ENCODE measurements at regions of chr2 and their contacts with region 1.

Region 1: GRCh38 chr2:180125245-180125962 is 118.3 kb upstream of the CWC22 start:
- DNase-seq: peak; percentile 76 to 84
- H3K4me3 ChIP-seq: no peak overlapping the region
- H3K27ac ChIP-seq: no peak overlapping the region
- H3K4me1 ChIP-seq: peaks cover 11% of the 10 kb centered on the region; the same call in 1 of the 2 replicates
- H3K27me3 ChIP-seq: no peaks in the 10 kb centered on the region
- CTCF ChIP-seq: peak; percentile 87

Region 2: DNA sequence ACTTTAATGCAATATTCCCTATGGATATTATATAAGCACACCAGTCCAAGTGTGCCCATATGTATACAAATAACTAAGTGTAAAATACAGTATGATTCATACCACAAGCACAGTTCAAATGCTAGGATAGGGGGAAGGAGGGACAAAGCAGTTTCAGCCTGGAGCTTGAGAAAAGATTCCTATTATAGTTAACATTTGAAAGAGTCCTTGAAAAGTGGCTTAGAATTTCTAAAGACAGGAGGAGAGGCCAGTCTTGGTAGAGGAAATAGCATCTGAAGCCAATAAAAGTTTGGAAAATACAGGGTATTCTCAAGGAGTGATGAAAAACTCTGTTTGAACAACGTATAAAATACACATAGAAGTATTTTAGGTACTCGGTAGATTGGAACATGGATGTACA is 55.1 kb after region 1 on chr2:
- CTCF ChIA-PET with region 1: interaction called, 14 read pairs
- POLR2A ChIA-PET with region 1: no interaction called
- intact Hi-C with region 1: no loop called
- DNase-seq: no peak
- H3K4me3 ChIP-seq: no peak overlapping the region
- H3K27ac ChIP-seq: no peak overlapping the region
- H3K4me1 ChIP-seq: no peaks in the 10 kb centered on the region
- H3K27me3 ChIP-seq: no peaks in the 10 kb centered on the region
- CTCF ChIP-seq: no peak

Region 3: DNA sequence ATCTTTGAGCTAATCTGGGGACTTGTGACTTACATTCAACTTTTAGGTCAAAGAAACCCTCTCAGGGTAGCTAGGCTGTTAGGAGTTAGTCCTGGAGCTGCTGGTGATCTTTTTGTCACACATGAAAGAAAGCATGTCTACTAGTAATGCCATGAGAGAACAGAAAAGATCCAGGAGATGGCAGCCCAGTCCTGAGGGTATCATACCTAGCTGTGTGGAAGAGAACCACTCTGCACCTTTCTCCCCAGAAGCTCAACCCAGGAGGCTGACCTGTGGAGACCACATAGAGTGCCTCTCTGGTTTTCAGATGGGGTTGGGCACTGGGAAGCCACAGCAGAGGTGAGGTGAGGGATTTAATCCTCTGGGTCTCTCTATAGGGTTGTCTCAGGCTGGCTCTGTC is 394.8 kb after region 1 on chr2:
- CTCF ChIA-PET with region 1: interaction called, 8 read pairs
- POLR2A ChIA-PET with region 1: no interaction called
- intact Hi-C with region 1: loop called (anchors 2 kb)
- DNase-seq: peak in 1 of 2 experiments; percentile 27
- H3K4me3 ChIP-seq: no peak overlapping the region
- H3K27ac ChIP-seq: no peak overlapping the region
- H3K4me1 ChIP-seq: peaks cover 55% of the 10 kb centered on the region
- H3K27me3 ChIP-seq: no peaks in the 10 kb centered on the region
- CTCF ChIP-seq: peak; percentile 48

Region 4: DNA sequence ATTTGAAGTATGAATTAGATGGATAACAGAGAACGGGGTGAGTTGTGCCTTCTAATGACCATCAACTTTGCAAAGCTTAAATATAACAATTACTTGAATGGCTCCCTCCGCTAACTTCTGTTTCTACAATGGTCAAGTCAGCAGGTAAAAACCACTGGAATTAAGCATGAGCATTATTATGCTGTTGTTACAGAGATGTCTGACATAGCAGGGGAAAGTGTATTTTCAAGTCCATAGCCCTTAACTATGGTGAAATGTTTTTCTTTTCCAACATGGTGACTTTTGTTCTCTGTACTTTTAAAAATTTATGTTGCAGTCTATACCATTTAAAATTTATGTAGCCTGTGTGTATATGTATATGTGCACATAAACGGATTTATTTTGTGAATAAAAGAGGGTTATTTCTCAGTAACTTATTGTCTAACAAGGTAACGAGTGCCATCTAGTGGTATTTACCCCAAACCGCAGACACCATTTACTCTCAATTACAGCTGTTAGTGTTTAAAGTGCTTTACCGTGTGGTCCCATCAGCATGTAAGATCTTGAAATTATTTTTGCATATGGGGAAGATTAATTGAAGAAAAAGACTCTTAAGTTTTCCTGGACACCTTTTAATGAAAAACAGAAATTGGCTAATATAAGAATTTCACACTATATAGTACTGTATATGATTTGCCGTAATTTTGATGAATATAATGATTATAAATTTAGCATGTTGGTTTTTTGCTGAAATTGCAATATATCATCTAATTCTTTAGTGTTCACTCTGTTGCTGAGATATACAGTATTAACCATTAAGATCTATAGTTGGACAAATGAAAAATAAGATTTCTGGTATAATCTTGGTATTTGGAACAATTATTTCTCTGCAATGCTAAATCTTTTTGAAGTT is 933.2 kb after region 1 on chr2:
- CTCF ChIA-PET with region 1: interaction called, 7 read pairs
- POLR2A ChIA-PET with region 1: no interaction called
- intact Hi-C with region 1: loop called (anchors 1 kb)
- DNase-seq: peak in 1 of 2 experiments; percentile 56
- H3K4me3 ChIP-seq: no peak overlapping the region
- H3K27ac ChIP-seq: no peak overlapping the region
- H3K4me1 ChIP-seq: no peaks in the 10 kb centered on the region
- H3K27me3 ChIP-seq: no peaks in the 10 kb centered on the region
- CTCF ChIP-seq: peak; percentile 99

Region 5: DNA sequence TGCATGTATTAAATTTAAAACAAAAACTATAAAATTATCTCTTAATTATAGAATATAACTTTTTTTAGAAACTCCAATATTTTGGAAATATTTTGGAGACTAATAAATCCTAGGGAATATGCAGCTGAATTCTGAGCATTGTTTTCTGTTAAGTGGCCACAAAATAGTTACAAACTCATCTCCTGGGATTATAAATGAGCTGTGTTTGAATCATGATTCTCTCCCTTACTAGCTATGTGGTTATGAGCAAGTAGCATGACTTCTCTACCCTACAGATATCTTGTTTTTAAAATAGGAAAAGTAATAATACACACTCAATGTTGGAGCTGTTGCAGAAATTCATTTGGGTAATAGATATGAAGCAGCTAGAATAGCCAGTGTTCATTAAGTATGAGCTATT is 1193.9 kb after region 1 on chr2:
- CTCF ChIA-PET with region 1: no interaction called
- POLR2A ChIA-PET with region 1: interaction called, 25 read pairs
- intact Hi-C with region 1: no loop called
- DNase-seq: no peak
- H3K4me3 ChIP-seq: no peak overlapping the region
- H3K27ac ChIP-seq: no peak overlapping the region
- H3K4me1 ChIP-seq: no peaks in the 10 kb centered on the region
- H3K27me3 ChIP-seq: no peaks in the 10 kb centered on the region
- CTCF ChIP-seq: no peak

Region 6: GRCh38 chr2:181632733-181633401 is 1507.5 kb after region 1 on chr2:
- CTCF ChIA-PET with region 1: interaction called, 14 read pairs
- POLR2A ChIA-PET with region 1: no interaction called
- intact Hi-C with region 1: no loop called
- DNase-seq: no peak
- H3K4me3 ChIP-seq: no peak overlapping the region
- H3K27ac ChIP-seq: no peak overlapping the region
- H3K4me1 ChIP-seq: no peaks in the 10 kb centered on the region
- H3K27me3 ChIP-seq: no peaks in the 10 kb centered on the region
- CTCF ChIP-seq: no peak

Region 7: GRCh38 chr2:182049372-182050148 is 1924.2 kb after region 1 on chr2:
- CTCF ChIA-PET with region 1: interaction called, 18 read pairs
- POLR2A ChIA-PET with region 1: no interaction called
- intact Hi-C with region 1: no loop called
- DNase-seq: no peak
- H3K4me3 ChIP-seq: no peak overlapping the region
- H3K27ac ChIP-seq: no peak overlapping the region
- H3K4me1 ChIP-seq: no peaks in the 10 kb centered on the region
- H3K27me3 ChIP-seq: no peaks in the 10 kb centered on the region
- CTCF ChIP-seq: no peak